ENCODE measurements at regions of chr3 and their contacts with region 1.

Region 1: GRCh38 chr3:8466526-8466925 is 35.1 kb upstream of the LMCD1 start:
- DNase-seq: no peak
- H3K4me3 ChIP-seq: no peak overlapping the region
- H3K27ac ChIP-seq: no peak overlapping the region
- H3K4me1 ChIP-seq: peaks cover 0 to 13% of the 10 kb centered on the region in 2 donors
- H3K27me3 ChIP-seq: no peaks in the 10 kb centered on the region
- CTCF ChIP-seq: no peak

Region 2: GRCh38 chr3:8261018-8261417 is 205.5 kb before region 1 on chr3:
- intact Hi-C with region 1: no loop called
- DNase-seq: no peak
- H3K4me3 ChIP-seq: no peak overlapping the region
- H3K27ac ChIP-seq: no peak overlapping the region
- H3K4me1 ChIP-seq: peaks cover 3 to 10% of the 10 kb centered on the region in 2 donors
- H3K27me3 ChIP-seq: no peaks in the 10 kb centered on the region
- CTCF ChIP-seq: no peak

Region 3: DNA sequence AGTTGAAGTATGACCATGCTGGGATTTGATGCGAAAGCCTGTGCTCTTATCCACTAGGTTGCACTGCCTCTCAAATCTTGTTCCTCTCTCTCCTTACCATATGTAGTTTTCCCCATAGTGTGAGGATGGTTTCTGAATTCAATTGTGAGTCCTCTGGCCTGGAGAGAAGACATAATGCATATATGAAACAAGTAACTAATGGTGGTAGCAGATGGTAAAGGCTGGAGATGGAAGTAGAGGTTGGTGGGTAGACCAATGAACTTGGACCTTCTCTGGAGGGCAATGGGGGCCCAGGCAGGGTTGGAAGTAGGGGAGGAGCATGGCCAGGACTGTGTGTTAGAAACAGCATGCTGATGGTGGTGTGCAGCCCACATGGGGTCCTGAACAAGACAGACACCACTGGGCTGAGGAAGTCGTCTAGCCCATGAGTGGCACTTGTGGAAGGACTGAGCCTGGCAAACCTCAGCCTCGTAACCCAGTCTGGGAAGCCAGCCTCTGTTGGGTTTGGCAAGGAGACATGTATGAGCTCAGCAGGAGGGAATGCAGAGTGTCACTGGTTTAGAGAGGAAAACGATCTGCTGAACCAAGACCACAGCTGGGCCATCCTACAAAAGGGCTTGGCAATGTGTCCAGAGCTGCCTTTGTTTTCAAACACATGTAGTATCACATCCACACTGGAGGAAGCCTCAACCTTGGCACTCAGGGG is 16.6 kb after region 1 on chr3:
- intact Hi-C with region 1: loop called (anchors 1 kb)
- DNase-seq: peak; percentile 54 to 95
- H3K4me3 ChIP-seq: no peak overlapping the region
- H3K27ac ChIP-seq: peak overlapping the region; percentile 86 to 94
- H3K4me1 ChIP-seq: peaks cover 11 to 63% of the 10 kb centered on the region in 2 donors
- H3K27me3 ChIP-seq: no peaks in the 10 kb centered on the region
- CTCF ChIP-seq: no peak

Measured in ascending aorta (tissue), 2 donors.